ENCODE measurements at regions of chr2 and their contacts with region 1.

Region 1: GRCh38 chr2:96527286-96528005 is 9.1 kb upstream of the ARID5A start:
- DNase-seq: peak; percentile 58
- H3K4me3 ChIP-seq: peak overlapping the region; percentile 17 to 53 (median 50)
- H3K27ac ChIP-seq: peak overlapping the region; percentile 77
- H3K4me1 ChIP-seq: peaks cover 33% of the 10 kb centered on the region
- H3K27me3 ChIP-seq: no peaks in the 10 kb centered on the region
- CTCF ChIP-seq: peak; percentile 12 to 64
- POLR2A ChIP-seq: no peak

Region 2: DNA sequence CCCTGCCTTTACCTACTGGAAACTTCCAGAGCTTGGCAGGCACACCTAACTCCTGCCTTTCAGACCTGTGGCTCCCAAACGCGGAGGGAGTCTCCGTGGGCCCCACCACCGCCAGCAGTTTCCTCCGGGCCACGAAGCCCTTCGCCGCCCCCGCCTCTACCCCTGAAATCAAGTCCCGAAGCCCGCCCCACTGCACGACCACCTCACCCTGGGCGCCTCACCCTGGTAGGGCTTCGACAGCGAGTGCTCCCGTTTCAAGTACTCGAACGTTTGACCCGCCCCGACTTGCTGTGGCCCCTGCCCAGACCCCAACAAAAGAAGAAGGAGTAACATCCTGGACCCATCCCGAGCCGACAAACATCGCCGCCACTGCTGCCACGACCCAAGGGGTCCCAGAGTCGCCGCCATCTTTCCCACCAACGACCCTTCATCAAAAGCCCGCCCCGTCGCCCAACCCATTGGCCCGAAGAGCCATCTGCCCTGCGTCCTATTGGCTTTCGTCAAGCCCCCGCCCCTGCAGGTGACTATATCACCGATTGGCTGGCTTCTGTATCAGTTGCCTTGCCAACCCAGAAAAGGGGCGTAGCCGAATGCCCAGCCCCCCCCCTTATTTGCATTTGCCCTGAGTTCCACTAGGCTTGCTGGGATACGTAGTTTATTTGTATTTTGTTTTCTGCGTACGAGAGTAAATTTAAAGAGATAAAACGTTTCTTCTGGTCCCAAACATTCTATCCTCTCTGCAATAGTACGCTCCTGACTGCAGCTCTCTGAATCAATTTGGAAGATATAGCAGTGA is 212.4 kb after region 1 on chr2 and contains the start of gene LMAN2L:
- CTCF ChIA-PET with region 1: no interaction called
- POLR2A ChIA-PET with region 1: no interaction called
- dilution Hi-C with region 1: no loop called
- intact Hi-C with region 1: loop called (anchors 5 kb)
- DNase-seq: peak; percentile 98
- H3K4me3 ChIP-seq: peak within 1 kb of the TSS; percentile 76 to 91 (median 84)
- H3K27ac ChIP-seq: peak within 1 kb of the TSS; percentile 58
- H3K4me1 ChIP-seq: peaks cover 16% of the 10 kb centered on the region
- H3K27me3 ChIP-seq: peaks cover 0 to 2% of the 10 kb centered on the region in 2 experiments
- CTCF ChIP-seq: no peak
- POLR2A ChIP-seq: peak; percentile 85
- total RNA-seq, gene LMAN2L: 15.4 and 18.2 TPM in 2 replicates

Measured in endothelial cell of umbilical vein (primary cell).